ENCODE measurements at regions of chr19 and their contacts with region 1.

Region 1: GRCh38 chr19:54029930-54030490 is 33.7 kb downstream of the VSTM1 start:
- DNase-seq: no peak
- H3K4me3 ChIP-seq: no peak overlapping the region
- CTCF ChIP-seq: peak; percentile 69

Region 2: DNA sequence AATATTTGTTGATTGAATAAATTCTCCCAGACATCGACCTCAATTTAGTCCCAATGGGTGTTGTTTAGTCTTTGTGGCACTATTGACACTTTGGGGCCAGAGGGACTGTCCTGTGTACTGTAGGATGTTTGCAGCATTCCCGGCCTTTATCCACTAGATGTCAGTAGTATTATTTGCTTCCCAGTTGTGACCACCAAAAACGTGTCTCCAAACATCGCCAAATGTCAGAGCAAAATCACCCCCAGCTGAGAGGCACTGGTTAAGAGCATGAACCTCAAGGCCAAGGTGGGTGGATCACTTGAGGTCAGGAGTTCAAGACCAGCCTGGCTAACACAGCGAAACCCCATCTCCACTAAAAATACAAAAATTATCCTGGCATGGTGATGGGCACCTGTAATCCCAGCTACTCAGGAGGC is 221.3 kb before region 1 on chr19:
- CTCF ChIA-PET with region 1: interaction called, 170 read pairs
- POLR2A ChIA-PET with region 1: no interaction called
- DNase-seq: no peak
- H3K4me3 ChIP-seq: no peak overlapping the region
- CTCF ChIP-seq: peak; percentile 45

Region 3: DNA sequence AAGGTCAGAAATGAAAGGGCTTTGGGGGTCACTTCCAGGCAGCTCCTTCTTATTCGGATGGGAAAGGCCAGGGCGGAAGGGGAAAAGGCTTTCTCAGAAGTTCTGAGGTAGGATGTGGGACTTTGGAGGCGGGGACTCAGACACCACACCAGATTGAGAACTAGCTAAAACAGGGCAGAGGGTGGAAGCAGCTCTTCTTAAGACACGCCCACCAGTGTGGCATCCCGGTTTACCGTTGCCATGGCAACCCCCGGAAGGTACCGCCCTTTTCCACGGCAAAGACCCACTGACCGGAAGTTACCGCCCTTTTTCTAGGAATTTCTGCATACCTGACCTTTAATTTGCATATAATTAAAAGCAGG is 286.7 kb after region 1 on chr19:
- CTCF ChIA-PET with region 1: no interaction called
- POLR2A ChIA-PET with region 1: no interaction called
- DNase-seq: no peak
- H3K4me3 ChIP-seq: no peak overlapping the region
- CTCF ChIP-seq: no peak